HAP-1 (cell line): ENCODE measurements at regions of chr2 and their contacts with region 1.

Region 1: DNA sequence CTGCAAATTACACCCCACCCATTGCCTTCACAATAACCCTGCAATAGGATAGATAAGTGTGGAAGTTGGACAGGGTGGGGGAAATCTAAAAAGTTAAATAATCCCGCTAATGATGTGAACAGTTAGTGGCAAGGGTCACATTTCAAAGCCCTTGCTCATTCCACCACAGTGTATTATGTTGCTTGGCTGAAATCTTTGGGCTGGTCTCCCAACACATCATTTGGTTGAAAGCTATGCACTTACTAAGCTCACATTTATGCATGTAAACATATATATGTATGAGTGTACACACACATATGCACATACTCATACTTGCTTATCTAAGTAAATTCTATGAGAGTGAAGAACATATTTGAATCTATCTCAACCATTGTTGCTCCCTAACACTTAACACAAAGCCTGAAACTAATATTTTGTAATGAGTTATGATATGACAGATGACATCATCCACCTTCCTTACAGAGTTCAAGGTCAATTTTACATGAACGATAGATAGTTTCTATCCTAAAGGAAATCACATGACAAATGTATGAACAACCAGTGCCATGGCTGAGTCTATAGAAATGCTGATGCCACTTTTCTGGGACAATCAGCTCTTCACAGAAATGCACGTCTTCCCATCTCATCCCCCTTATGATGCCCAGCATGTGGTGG is 197.6 kb downstream of the RDH14 start:
- DNase-seq: no peak
- H3K4me3 ChIP-seq: no peak overlapping the region
- H3K4me1 ChIP-seq: no peaks in the 10 kb centered on the region
- H3K27me3 ChIP-seq: no peaks in the 10 kb centered on the region

Region 2: DNA sequence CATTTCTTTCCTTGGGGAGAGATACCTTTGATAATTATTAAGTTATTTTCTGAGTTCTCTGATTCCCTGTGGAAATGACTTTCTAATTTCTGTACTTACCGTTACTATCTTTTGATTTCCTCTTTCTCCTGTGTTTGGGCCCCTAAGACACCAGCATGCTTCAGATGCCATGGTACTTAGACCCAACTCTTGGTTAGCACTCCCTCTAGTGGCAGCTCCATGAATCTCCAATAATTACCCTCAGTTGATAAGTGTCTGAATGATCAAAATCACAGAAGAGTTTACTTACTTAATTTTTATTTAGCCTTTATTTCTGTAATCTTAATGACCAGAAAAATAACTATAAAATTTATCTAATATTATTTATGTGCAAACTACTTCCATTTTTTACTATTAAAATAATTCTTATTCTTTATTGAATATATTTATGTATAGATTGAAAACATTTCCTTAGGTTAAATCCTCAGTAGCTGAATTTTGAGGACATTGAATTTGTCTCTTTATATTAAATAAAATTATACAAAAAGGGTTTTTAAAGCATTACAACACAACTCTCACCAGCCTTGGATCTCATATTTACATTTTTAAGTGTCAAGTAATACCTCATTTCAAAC is 184.0 kb before region 1 on chr2:
- in situ Hi-C with region 1: loop called (anchors 25 kb)
- DNase-seq: peak; percentile 53 to 78
- H3K4me3 ChIP-seq: no peak overlapping the region
- H3K4me1 ChIP-seq: peaks cover 4% of the 10 kb centered on the region
- H3K27me3 ChIP-seq: no peaks in the 10 kb centered on the region

Region 3: DNA sequence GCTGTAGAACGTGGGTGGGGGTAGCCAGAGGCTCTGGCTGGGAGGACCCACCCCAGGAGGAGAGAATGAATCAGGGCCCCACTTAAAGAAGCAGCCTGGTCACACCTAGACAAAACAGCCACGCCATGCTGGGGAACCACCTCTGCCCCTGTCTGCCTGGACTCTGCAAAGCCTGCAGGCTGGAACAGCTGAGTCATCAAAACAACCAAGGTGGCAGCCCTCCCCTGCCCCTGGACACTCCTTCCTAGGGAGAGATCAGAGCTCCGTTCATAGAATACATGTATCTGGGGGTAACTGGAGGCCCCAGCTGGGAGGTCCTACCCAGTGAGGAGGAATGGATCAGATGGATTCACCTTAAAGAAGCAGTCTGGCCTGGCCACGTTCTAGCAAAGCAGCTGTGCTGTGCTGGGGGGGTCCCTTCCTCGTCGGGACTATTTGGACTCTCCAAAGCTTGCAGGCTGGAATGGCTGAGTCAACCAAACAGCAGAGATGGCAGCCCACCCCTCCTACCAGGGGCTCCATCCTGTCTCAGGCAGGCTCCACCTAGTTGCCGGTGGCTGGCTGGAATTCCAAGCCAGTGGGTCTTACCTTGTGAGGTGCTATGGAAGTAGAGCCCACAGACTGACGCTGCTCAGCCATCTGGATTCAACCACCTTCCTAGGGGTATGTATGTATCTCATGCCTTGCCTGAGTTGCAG is 277.1 kb after region 1 on chr2:
- in situ Hi-C with region 1: no loop called
- DNase-seq: no peak
- H3K4me3 ChIP-seq: no peak overlapping the region
- H3K4me1 ChIP-seq: peaks cover 9% of the 10 kb centered on the region; the same call in 1 of the 2 replicates
- H3K27me3 ChIP-seq: no peaks in the 10 kb centered on the region